Gastrocnemius medialis (tissue), 4 donors: ENCODE measurements at regions of chr3 and their contacts with region 1.

Region 1: DNA sequence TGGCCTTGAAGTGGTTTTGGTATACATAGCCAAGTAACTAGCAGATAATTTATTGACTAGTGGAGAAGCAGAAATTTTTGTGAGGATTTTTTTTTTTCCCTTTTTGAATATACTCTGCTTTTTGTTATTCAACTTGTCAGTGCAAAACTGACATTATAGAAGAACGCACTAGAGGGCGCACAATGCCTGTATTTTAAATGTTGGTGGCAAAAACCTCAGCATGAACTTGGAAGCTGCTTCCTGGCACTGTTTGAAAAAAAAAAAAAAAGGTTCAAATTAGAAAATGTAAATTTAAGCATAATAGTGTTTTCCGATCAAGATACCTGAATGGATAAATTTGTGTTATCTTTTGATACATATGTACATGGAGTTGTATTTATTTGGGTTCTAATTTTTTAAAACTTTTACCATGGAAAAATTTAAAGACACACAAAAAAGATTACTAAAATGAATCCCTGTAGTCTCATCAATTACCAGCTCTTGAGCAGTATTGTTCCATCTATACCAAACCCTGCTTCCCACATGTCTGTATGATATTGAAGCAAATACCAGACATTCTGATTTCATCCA is 56.0 kb downstream of the SLC25A26 start:
- DNase-seq: peak; percentile 13 to 33
- ATAC-seq: peak in 1 of 2 donors; percentile 76
- H3K4me3 ChIP-seq: no peak overlapping the region
- H3K27ac ChIP-seq: no peak overlapping the region
- H3K4me1 ChIP-seq: peaks cover 10 to 12% of the 10 kb centered on the region in 2 donors
- H3K27me3 ChIP-seq: no peaks in the 10 kb centered on the region
- CTCF ChIP-seq: peak; percentile 41 to 72 (median 62)
- POLR2A ChIP-seq: no peak

Region 2: DNA sequence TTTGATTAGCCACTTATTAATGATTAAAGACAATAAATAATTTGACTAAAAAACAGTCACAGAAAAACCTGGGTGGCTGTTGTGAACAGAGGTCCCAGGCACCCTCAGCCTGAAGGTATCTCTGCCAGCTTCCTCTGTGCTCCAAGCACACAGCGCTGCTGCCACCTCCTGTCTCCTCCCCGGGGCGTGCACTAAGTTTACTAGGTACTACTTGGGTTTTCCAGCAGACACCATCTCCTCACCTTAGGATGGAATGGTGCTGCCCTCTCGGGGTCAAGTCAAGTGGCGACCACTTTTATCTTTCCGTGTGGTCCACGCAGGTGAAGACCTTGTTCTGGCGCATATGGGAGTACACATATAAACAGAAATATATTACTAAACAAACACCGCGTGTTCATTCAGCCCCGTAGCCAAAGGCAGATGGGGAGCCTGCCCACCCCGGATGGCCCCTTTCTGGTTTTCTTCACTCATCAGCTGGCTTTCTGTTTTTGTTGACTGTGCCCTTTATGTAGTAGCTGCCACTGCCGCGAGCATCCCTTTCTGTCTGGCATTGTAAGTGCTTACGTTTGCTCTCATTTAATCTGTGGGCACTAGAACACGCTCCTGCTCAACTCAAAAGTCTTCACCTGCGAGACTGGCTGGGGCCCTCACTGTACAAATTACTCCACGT is 96.0 kb after region 1 on chr3:
- in situ Hi-C with region 1: loop called in 1 of 4 experiments (anchors 10 kb)
- intact Hi-C with region 1: loop called (anchors 5 kb)
- DNase-seq: no peak
- ATAC-seq: no peak
- H3K4me3 ChIP-seq: no peak overlapping the region
- H3K27ac ChIP-seq: no peak overlapping the region
- H3K4me1 ChIP-seq: peaks cover 15 to 17% of the 10 kb centered on the region in 2 donors
- H3K27me3 ChIP-seq: no peaks in the 10 kb centered on the region
- CTCF ChIP-seq: no peak
- POLR2A ChIP-seq: no peak

Region 3: DNA sequence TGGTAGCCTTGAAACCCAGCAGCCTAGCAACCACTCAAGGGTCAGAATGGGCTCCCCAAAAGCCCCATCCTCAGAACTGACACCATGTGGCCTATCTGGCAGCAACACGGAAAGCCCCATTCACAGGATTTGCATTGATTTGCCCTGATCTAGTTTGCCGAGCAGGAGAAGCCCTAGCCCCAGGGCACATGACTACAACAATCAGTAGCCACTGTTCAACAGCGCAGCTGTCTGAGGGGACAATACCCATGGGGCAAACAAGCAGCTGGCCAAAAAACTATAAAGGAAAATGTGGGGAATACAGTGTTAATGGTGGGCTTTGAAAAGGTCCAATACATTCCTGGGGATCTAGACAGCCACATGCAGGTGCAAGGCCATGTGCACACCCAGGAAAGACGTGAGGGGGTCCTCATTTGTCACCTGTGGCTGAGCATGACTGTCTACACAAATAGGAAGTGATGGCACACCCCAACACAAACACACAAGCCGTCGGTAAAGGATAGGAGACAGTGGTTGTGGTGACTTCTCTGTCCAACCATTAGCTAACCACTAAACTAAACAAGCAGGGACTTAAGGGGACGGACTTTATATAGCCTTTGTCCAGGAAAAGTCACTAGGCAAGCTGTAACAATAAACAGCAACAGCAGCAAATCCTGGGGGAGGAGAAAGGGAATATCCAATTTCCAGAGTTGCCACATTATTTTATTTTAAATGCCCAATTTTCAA is 110.3 kb after region 1 on chr3:
- in situ Hi-C with region 1: loop called in 1 of 4 experiments (anchors 10 kb)
- intact Hi-C with region 1: no loop called
- DNase-seq: no peak
- ATAC-seq: peak; percentile 72 to 73
- H3K4me3 ChIP-seq: no peak overlapping the region
- H3K27ac ChIP-seq: no peak overlapping the region
- H3K4me1 ChIP-seq: peaks cover 0 to 3% of the 10 kb centered on the region in 2 donors
- H3K27me3 ChIP-seq: no peaks in the 10 kb centered on the region
- CTCF ChIP-seq: no peak
- POLR2A ChIP-seq: no peak

Region 4: DNA sequence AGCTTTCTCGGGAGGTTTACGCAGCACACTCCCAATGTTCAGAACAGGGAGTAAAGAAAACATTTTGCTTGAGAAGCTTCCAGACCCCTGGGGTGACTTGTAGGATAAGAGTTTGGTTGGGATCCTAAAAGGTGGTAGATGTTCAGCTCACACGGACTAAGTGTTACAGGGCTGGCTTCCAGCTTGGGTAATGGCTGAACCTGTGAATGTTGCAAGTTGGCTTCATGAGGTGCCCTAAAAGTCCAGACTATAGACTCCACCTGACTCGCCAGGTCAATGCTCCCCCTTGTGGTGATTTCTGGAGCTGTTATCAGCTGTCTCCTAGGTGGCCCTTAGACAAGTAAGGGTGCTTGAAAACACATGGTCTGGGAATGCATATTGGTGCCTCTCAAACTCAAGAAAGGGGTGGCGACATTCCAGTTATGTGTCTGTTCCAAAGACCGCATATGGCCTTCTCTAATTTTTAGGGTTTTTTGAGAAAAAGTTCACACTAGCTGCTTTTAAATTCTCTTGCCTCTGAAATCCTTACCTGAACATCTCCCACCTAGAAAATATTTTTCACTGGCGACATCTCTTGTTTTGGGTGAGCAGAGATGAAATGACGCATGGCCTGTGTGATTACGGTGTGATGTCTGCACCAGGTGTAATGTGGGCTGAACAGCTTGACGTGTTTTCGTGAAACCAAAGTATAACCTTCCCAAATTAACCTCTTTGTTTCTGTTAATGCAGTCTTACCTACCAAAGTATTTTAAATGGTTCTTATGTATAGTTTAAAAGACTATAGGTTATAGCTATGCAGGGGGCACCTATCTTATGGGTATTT is 545.6 kb after region 1 on chr3:
- in situ Hi-C with region 1: loop called (anchors 5 kb)
- intact Hi-C with region 1: loop called (anchors 1 kb)
- DNase-seq: peak; percentile 15 to 60
- ATAC-seq: peak; percentile 88 to 94
- H3K4me3 ChIP-seq: no peak overlapping the region
- H3K27ac ChIP-seq: no peak overlapping the region
- H3K4me1 ChIP-seq: no peaks in the 10 kb centered on the region
- H3K27me3 ChIP-seq: no peaks in the 10 kb centered on the region
- CTCF ChIP-seq: peak; percentile 73 to 83 (median 80)
- POLR2A ChIP-seq: no peak